HEK293T (cell line): ENCODE measurements at regions of chr6 and their contacts with region 1.

Region 1: GRCh38 chr6:136289579-136290409 is at the start of gene BCLAF1:
- DNase-seq: peak; percentile 97

Region 2: GRCh38 chr6:136180704-136181511 is 108.9 kb before region 1 on chr6:
- CTCF ChIA-PET with region 1: no interaction called
- POLR2A ChIA-PET with region 1: no interaction called
- DNase-seq: no peak

Region 3: DNA sequence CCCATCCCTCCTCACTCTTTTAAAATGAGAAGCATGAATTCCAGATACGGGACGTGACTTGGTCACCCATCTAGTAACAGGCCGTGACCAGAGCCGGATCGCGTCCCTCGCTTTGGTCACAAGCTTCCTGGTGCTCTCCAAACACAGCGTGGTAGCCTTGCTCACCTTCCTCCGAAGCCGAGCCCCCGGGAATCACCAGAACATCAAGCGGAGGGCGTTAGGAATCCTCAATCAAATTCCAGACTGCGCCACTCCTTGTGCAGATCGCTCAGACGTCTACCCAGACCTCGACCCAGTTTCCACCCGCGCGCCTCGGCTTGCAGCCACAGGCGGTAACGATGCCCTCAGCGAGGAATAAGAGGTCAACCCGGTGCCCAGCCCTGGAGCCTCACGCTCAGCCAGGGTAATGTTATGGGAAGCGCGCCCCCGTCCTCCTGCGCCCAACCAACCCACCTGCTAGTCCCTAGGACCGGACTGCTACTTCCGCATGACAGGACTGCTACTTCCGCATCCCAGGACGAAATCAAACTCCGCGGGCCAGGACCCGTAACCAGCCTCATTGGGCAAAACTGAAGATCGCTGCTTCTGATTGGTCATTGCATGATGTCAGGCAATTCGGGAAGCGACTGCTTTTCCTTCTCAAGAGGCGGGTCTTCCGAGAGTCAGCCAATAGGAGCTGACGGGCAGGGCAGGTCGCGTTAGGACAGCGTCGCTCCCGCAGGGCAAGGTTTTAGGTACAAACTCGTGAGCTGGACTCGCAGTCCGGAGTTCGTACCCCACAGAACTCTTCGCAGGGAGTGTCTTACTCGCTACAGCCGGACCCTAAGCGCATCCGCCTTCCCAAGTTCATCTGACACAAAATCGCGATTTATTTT is 39.7 kb before region 1 on chr6 and contains the start of gene MTFR2:
- CTCF ChIA-PET with region 1: no interaction called
- POLR2A ChIA-PET with region 1: interaction called, 61 read pairs
- DNase-seq: peak; percentile 98

Region 4: GRCh38 chr6:136274062-136274461 is 15.7 kb before region 1 on chr6:
- CTCF ChIA-PET with region 1: interaction called, 3 read pairs
- POLR2A ChIA-PET with region 1: interaction called, 11 read pairs
- DNase-seq: no peak

Region 5: DNA sequence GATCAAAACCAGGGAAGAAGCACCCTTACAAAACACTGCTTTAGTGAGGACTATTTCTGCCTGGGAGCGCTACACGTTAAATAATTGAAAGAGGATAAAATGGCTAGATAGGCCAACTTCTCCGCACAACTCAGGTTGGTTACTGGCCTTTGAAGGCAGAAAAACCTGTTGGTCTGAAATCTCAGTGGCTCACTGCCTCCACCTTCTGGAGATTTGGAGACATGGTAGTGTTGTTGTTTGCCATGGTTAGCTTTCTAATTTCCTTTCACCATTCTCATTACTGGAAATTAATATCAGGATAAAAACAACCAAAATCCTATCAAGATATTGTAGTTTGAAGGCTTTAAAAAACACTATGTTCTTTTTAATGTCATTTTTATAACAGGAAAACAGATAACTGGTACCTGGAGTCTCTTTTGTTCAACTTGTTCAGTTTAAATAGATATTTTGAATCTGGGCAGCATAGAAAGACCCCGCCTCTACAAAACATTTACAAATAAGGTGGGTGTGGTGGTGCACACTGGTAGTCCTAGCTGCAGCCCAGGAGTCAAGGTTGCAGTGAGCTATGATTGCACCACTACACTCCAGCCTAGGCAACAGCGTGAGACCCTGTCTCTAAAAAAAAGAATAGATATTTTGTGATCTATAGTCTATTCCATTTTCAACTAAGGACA is 27.4 kb after region 1 on chr6:
- CTCF ChIA-PET with region 1: interaction called, 6 read pairs
- POLR2A ChIA-PET with region 1: interaction called, 46 read pairs
- DNase-seq: peak; percentile 79

Region 6: GRCh38 chr6:136526196-136526930 is 236.6 kb after region 1 on chr6:
- CTCF ChIA-PET with region 1: no interaction called
- POLR2A ChIA-PET with region 1: interaction called, 11 read pairs
- DNase-seq: peak; percentile 80